Activated CD4-positive, alpha-beta T cell treated with anti-CD3 and anti-CD28 coated beads, Interleukin-2, amount 10 ng/mL, durations not matched to agents 24 days and 14 days (primary cell): ENCODE measurements at regions of chr5 and their contacts with region 1.

Region 1: DNA sequence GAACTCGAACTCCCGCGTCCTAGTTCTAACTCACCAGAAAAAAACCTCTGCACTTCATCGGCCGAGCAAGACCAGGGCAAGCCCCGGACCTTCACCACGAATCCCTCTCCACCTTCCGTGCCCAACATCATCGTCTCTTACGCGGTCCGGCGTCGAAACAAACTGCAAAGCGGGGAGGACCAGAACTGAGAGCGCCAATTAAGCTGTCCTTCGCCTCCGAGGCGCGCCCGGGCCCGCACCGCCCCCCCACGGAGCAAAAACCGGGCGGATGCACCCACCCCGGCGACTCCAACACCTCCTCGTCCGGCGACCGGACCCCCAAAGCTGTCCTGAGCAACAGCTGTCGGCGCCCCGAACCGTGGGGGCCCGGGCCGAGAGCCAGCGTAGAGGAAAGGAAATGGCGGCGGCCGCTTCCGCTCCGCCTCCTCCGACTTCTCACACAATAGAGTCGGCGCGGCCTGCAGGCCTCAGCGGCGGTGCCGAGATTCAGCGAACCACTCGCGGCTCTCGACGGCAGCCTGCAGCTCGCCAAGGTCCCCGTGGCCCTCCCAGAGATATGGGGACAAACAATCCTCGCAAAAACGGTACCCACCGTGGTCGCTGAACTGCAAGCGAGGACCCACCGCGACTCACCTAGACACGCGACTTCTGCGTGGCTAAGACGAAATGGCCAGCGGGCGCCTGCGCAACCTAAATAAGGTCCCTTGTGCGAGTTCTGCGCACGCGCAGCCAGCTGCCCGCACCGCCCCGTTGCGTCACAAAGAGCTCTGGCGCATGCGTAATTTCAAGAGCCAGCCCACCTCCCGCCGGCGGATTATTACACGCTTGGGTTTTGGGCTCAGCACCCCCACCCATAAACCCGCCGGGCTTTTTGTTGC is at the start of gene HNRNPH1:
- DNase-seq: peak; percentile 99
- H3K4me3 Mint-ChIP-seq: peak within 1 kb of the TSS; percentile 99
- H3K27ac Mint-ChIP-seq: peak within 1 kb of the TSS; percentile 99
- H3K4me1 Mint-ChIP-seq: peaks cover 39% of the 10 kb centered on the region
- H3K27me3 Mint-ChIP-seq: peaks cover 5% of the 10 kb centered on the region
- total RNA-seq, gene HNRNPH1: 952 and 964 TPM in 2 replicates

Region 2: GRCh38 chr5:179550511-179551230 is 72.6 kb before region 1 on chr5 and contains the start of gene RUFY1:
- intact Hi-C with region 1: loop called (anchors 2 kb)
- DNase-seq: peak; percentile 96
- H3K4me3 Mint-ChIP-seq: peak within 1 kb of the TSS; percentile 97
- H3K27ac Mint-ChIP-seq: peak within 1 kb of the TSS; percentile 99
- H3K4me1 Mint-ChIP-seq: peaks cover 23% of the 10 kb centered on the region
- H3K27me3 Mint-ChIP-seq: peaks cover 2% of the 10 kb centered on the region
- total RNA-seq, gene RUFY1: 38.8 and 40.6 TPM in 2 replicates

Region 3: DNA sequence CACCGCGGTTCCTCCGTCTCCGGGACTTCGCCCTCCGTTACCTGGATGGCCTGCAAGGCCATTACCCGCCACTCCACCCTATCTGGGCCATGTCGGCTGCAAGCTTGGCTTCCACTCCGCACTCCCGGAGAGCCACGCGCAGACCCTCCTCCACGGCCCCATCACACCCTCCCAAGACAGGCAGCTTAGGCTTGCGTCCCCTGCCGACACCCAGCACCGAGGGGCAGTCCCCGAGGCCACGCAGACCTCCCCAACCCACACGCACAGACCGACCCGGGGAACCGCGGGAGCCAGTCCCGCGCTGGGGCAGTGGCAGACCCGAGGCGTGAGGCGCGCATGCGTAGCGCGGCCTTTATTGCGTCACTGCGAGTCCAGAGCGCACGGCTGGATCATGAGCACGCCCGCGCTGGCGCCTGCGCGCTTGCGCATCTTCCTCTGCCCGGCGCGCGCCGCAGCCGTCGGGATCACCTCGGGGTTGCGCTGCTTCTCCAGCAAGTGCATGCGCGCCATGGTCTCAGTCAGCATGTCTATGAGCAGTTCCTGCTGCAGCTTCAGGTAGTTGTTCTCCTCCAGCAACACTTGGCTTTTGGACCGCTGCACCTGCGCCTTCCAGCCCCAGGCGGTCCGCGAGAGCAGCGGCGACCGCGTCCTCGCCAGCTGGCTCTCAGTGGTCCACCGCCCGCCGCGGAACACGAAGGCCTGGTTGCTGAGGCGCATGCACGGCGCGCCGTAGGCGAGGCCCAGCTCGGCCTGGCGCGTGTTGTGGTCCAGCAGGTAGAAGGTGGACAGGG is 55.2 kb after region 1 on chr5:
- intact Hi-C with region 1: loop called (anchors 1 kb)
- DNase-seq: peak; percentile 98
- H3K4me3 Mint-ChIP-seq: peak overlapping the region; percentile 100
- H3K27ac Mint-ChIP-seq: peak overlapping the region; percentile 99
- H3K4me1 Mint-ChIP-seq: peaks cover 31% of the 10 kb centered on the region
- H3K27me3 Mint-ChIP-seq: no peaks in the 10 kb centered on the region

Region 4: GRCh38 chr5:179732417-179732917 is 109.2 kb after region 1 on chr5 and contains the start of gene MAML1:
- intact Hi-C with region 1: loop called (anchors 1 kb)
- DNase-seq: peak; percentile 100
- H3K4me3 Mint-ChIP-seq: peak within 1 kb of the TSS; percentile 96
- H3K27ac Mint-ChIP-seq: peak within 1 kb of the TSS; percentile 91
- H3K4me1 Mint-ChIP-seq: peaks cover 31% of the 10 kb centered on the region
- H3K27me3 Mint-ChIP-seq: no peaks in the 10 kb centered on the region
- total RNA-seq, gene MAML1: 34.6 and 37.3 TPM in 2 replicates

Region 5: GRCh38 chr5:179858586-179859427 is 235.6 kb after region 1 on chr5 and contains the start of gene MRNIP:
- intact Hi-C with region 1: loop called (anchors 2 kb)
- DNase-seq: peak; percentile 97
- H3K4me3 Mint-ChIP-seq: peak within 1 kb of the TSS; percentile 98
- H3K27ac Mint-ChIP-seq: peak within 1 kb of the TSS; percentile 94
- H3K4me1 Mint-ChIP-seq: peaks cover 11% of the 10 kb centered on the region
- H3K27me3 Mint-ChIP-seq: no peaks in the 10 kb centered on the region
- total RNA-seq, gene MRNIP: 27.6 and 27.8 TPM in 2 replicates

Region 6: GRCh38 chr5:180291943-180292831 is 668.9 kb after region 1 on chr5 and contains the start of gene MAPK9:
- intact Hi-C with region 1: loop called (anchors 5 kb)
- DNase-seq: peak; percentile 96
- H3K4me3 Mint-ChIP-seq: peak within 1 kb of the TSS; percentile 95
- H3K27ac Mint-ChIP-seq: peak within 1 kb of the TSS; percentile 95
- H3K4me1 Mint-ChIP-seq: peaks cover 28% of the 10 kb centered on the region
- H3K27me3 Mint-ChIP-seq: no peaks in the 10 kb centered on the region
- total RNA-seq, gene MAPK9: 44.5 and 45.0 TPM in 2 replicates

Region 7: GRCh38 chr5:181243512-181244343 is 1620.5 kb after region 1 on chr5 and contains the start of gene RACK1:
- intact Hi-C with region 1: loop called (anchors 5 kb)
- DNase-seq: peak; percentile 96
- H3K4me3 Mint-ChIP-seq: peak within 1 kb of the TSS; percentile 98
- H3K27ac Mint-ChIP-seq: peak within 1 kb of the TSS; percentile 99
- H3K4me1 Mint-ChIP-seq: peaks cover 49% of the 10 kb centered on the region
- H3K27me3 Mint-ChIP-seq: no peaks in the 10 kb centered on the region
- total RNA-seq, gene RACK1: 2,172 and 2,196 TPM in 2 replicates